ENCODE measurements at regions of chr2 and their contacts with region 1.

Region 1: GRCh38 chr2:25982273-25982967 is at the start of gene KIF3C:
- DNase-seq: peak in 1 of 2 donors; percentile 81
- H3K4me3 ChIP-seq: peak within 1 kb of the TSS; percentile 86 to 95
- H3K27ac ChIP-seq: peak within 1 kb of the TSS; percentile 4 to 60
- H3K4me1 ChIP-seq: peaks cover 0 to 22% of the 10 kb centered on the region in 2 donors
- H3K27me3 ChIP-seq: no peaks in the 10 kb centered on the region
- CTCF ChIP-seq: no peak
- total RNA-seq, gene KIF3C: 11.9 TPM

Region 2: GRCh38 chr2:25726522-25726921 is 255.9 kb before region 1 on chr2:
- intact Hi-C with region 1: no loop called
- DNase-seq: no peak
- H3K4me3 ChIP-seq: no peak overlapping the region
- H3K27ac ChIP-seq: no peak overlapping the region
- H3K4me1 ChIP-seq: no peaks in the 10 kb centered on the region
- H3K27me3 ChIP-seq: no peaks in the 10 kb centered on the region
- CTCF ChIP-seq: no peak

Region 3: DNA sequence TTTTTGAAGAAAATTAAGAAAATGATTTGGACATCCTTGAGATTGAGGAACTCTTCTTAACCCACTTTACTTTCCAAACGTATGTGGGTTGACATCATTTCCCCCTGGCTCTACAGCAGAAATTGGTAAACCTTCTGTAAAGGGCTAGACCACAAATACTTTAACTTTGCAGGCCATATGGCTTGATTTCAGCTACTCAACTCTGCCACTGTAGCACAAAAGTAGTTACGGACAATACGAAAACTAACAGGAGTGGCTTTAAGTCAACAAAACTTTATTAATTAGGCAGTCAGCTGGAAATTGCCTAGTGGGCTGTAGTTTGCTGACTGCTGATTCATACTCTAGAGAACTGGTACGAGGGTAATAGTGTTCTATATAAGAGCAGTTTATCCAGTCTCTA is 225.9 kb before region 1 on chr2:
- intact Hi-C with region 1: no loop called
- DNase-seq: no peak
- H3K4me3 ChIP-seq: no peak overlapping the region
- H3K27ac ChIP-seq: no peak overlapping the region
- H3K4me1 ChIP-seq: no peaks in the 10 kb centered on the region
- H3K27me3 ChIP-seq: no peaks in the 10 kb centered on the region
- CTCF ChIP-seq: no peak

Region 4: DNA sequence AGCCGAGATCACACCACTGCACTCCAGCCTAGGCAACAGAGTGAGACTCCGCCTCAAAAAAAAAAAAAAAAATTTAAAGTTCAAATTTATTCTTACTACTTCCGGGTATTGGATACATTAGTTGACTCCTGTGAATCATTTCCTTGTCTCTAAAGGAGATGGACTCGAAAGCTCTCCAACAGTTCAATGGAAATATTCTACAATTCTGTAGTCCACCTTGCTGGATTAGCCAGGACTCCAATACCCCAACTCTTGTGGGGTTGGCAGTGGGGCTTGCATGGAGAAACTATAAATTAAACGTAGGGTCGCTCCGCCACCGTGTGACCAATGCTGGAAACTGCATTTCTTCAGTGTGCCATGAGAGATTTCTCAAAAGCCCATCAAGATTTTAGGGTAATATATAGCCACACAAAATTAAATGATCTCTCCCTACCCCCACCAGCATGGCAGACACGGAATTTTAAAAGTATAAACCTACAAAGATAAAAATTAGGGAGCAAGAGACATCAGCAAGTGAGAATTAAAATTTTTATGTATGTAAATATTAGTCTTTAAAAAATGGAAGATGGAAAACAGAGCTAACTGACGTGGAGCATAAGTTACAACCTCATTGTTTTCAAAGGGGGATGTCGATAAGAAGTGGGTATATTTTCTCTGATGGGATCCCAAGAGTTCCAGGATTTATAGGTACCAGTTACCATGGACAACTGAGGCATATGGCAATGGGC is 162.7 kb after region 1 on chr2:
- intact Hi-C with region 1: loop called (anchors 1 kb)
- DNase-seq: peak in 1 of 2 donors; percentile 68
- H3K4me3 ChIP-seq: no peak overlapping the region
- H3K27ac ChIP-seq: no peak overlapping the region
- H3K4me1 ChIP-seq: no peaks in the 10 kb centered on the region
- H3K27me3 ChIP-seq: no peaks in the 10 kb centered on the region
- CTCF ChIP-seq: peak; percentile 61 to 75 (median 74)

Region 5: GRCh38 chr2:26184555-26185303 is 202.3 kb after region 1 on chr2:
- intact Hi-C with region 1: loop called (anchors 10 kb)
- DNase-seq: peak; percentile 19 to 89
- H3K4me3 ChIP-seq: peak overlapping the region; percentile 73 to 82
- H3K27ac ChIP-seq: peak overlapping the region; percentile 67 to 73
- H3K4me1 ChIP-seq: no peaks in the 10 kb centered on the region
- H3K27me3 ChIP-seq: no peaks in the 10 kb centered on the region
- CTCF ChIP-seq: peak; percentile 44 to 87 (median 58)

Region 6: GRCh38 chr2:26345545-26346453 is 363.4 kb after region 1 on chr2 and contains the start of gene SELENOI:
- intact Hi-C with region 1: loop called (anchors 10 kb)
- DNase-seq: peak; percentile 96 to 99
- H3K4me3 ChIP-seq: peak within 1 kb of the TSS; percentile 74 to 94
- H3K27ac ChIP-seq: peak within 1 kb of the TSS; percentile 90 to 94
- H3K4me1 ChIP-seq: peaks cover 6 to 20% of the 10 kb centered on the region in 2 donors
- H3K27me3 ChIP-seq: no peaks in the 10 kb centered on the region
- CTCF ChIP-seq: no peak
- total RNA-seq, gene SELENOI: 2.2 TPM